Activated CD8-positive, alpha-beta T cell treated with anti-CD3 and anti-CD28 coated beads for 36 hours (primary cell): ENCODE measurements at regions of chr22 and their contacts with region 1.

Region 1: DNA sequence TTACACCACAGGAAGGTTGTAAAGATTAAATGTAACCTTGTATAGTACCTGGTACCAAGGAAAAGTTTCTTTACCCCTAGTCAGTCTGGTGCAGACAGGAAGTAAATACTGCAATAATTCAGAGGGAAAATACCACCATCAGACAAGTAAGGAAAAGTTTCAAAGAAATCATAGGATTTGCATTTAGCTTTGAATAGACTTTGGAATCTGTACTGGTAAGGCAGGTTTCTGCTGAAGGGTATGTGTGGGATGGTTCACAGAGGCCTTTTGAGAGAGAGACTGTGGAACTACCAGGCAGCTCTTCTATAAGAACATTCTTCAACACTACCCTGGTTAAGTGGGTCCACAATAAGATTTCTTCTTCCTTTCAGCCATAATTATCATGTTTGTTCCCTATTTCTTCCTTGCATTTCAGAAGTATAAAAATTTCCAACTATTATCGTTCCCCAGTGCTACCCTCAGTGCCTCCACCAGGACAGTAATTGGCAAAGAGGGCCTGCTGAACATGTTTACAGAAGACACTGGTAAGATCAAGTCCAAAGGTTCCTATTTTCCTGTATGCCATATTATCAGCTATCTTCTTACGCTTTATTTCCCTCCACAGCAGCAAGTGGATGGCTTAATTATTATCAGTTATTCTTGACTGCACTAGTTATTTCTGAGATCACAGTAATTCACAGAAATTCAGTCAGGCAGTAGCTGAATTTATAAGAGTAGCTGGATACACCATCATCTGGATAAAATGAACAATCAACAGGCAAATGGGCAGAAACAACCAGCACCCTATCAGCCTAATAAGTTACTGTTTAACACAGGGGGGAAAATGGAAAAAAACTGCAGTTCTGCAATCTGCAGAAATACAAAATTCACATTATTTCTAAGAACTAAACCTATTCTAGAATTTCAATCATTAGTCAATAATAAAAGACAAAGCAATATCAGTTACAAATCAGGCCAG is 48.5 kb downstream of the PITPNB start:
- DNase-seq: no peak
- ATAC-seq: no peak
- H3K4me3 Mint-ChIP-seq: no peak overlapping the region
- H3K27ac Mint-ChIP-seq: no peak overlapping the region
- H3K4me1 Mint-ChIP-seq: peaks cover 65% of the 10 kb centered on the region
- H3K27me3 Mint-ChIP-seq: no peaks in the 10 kb centered on the region
- CTCF ChIP-seq: no peak

Region 2: GRCh38 chr22:27853424-27853823 is 17.1 kb before region 1 on chr22:
- CTCF ChIA-PET with region 1: no interaction called
- POLR2A ChIA-PET with region 1: no interaction called
- intact Hi-C with region 1: no loop called
- DNase-seq: no peak
- ATAC-seq: peak; percentile 20
- H3K4me3 Mint-ChIP-seq: no peak overlapping the region
- H3K27ac Mint-ChIP-seq: no peak overlapping the region
- H3K4me1 Mint-ChIP-seq: peaks cover 2% of the 10 kb centered on the region
- H3K27me3 Mint-ChIP-seq: no peaks in the 10 kb centered on the region
- CTCF ChIP-seq: no peak

Region 3: DNA sequence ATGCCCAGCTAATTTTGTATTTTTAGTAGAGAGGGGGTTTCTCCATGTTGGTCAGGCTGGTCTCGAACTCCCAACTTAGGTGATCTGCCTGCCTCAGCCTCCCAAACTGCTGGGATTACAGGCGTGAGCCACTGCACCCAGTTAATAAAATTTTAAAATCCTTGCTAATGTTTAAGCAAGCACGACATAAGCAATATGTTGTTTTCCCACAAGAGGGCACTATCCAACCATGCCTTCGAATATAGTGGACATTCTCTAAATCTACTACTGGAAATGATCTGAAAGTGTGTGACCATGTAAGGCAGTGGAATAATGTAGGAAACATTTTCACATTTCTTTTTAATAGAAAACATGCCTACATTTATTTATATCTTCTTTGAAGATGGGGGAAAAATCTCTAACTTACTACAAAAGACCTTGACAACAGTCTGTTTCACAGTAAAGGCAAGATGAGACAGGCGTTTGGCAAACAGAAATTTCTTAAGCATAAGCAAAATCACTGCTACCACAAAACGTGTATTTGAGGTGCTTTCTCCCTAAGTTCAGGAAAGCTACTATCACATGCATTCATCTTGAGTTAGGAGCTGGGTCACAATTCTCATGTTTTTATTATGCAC is 10.4 kb after region 1 on chr22:
- CTCF ChIA-PET with region 1: interaction called, 28 read pairs
- POLR2A ChIA-PET with region 1: no interaction called
- intact Hi-C with region 1: no loop called
- DNase-seq: peak; percentile 27
- ATAC-seq: no peak
- H3K4me3 Mint-ChIP-seq: no peak overlapping the region
- H3K27ac Mint-ChIP-seq: no peak overlapping the region
- H3K4me1 Mint-ChIP-seq: peaks cover 39% of the 10 kb centered on the region
- H3K27me3 Mint-ChIP-seq: no peaks in the 10 kb centered on the region
- CTCF ChIP-seq: peak; percentile 67